ENCODE measurements at regions of chr19 and their contacts with region 1.

Region 1: DNA sequence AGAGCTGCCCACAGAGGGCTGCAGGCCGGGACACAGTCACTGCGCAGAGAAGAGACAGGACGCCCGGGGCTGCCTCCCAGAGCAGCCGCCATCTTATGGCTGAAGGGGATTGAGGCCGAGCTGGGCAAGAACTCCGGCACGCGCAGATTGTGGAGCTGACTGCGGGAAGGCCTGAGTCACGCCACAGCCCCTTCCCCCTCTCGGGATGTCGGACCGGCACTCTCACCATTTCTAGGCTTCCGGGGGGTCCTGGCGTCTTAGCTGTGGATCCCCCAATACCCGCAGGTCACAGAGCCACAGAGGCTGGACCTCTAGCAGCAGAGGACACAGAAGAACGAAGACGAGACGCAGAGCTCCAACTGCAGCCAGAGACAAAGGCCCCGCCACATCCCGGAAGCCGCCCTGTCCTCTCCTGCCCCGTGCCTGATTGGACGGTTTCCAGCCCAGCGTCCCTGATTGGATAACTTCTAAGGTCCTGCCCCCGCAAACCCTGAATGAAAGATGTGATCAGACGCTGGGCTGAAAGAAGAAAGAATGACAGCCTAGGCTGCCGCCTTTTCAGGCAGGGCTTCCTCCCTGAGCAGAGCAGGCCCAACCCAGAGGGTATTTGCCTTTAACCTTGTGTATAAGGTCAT is at the start of gene ZNF43:
- DNase-seq: peak; percentile 67
- H3K4me3 ChIP-seq: peak within 1 kb of the TSS; percentile 81
- CTCF ChIP-seq: no peak

Region 2: DNA sequence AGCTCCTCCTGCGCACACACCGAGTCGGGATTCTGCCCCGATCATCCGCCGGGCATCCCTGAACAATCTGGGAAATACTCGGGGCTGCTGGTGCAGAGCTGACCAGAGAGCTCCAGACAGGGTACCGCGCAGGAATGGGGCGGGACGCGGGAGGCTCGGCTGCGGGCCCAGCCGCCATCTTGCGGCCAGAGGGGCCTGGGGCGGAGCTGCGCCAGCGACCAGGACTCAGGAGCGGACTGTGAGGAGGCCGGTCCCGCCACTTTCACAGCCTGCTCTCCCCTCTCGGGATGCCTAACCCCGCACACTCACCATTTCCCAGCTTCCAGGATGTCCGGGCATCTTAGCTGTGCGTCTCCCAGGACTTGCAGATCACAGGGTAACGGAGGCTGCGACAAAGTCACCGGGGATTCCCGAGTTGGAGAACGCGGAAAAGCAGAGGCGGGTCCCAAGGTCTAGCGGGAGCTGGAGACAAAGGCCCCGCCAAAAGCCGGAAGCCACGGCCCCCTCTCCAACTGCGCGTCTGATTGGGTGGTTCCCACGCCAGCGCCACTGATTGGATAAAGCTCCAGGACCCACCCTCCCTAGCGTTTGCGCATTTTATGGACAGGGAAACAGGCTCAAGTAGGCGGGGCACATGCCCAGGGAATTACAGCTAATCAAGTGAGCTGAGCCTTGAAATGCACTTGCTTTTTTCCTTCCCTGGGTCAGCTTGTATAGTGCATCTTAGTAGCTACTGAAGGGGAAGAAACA is 15.8 kb after region 1 on chr19:
- CTCF ChIA-PET with region 1: no interaction called
- POLR2A ChIA-PET with region 1: interaction called, 19 read pairs
- DNase-seq: peak; percentile 65
- H3K4me3 ChIP-seq: peak overlapping the region; percentile 89
- CTCF ChIP-seq: no peak

Measured in AG04449 (cell line).